ENCODE measurements at regions of chr21 and their contacts with region 1.

Region 1: GRCh38 chr21:45590246-45590725 is 48.0 kb upstream of the SLC19A1 start:
- DNase-seq: peak; percentile 69
- H3K4me3 Mint-ChIP-seq: no peak overlapping the region
- H3K27ac Mint-ChIP-seq: no peak overlapping the region
- H3K4me1 Mint-ChIP-seq: no peaks in the 10 kb centered on the region
- H3K27me3 Mint-ChIP-seq: peaks cover 4% of the 10 kb centered on the region

Region 2: DNA sequence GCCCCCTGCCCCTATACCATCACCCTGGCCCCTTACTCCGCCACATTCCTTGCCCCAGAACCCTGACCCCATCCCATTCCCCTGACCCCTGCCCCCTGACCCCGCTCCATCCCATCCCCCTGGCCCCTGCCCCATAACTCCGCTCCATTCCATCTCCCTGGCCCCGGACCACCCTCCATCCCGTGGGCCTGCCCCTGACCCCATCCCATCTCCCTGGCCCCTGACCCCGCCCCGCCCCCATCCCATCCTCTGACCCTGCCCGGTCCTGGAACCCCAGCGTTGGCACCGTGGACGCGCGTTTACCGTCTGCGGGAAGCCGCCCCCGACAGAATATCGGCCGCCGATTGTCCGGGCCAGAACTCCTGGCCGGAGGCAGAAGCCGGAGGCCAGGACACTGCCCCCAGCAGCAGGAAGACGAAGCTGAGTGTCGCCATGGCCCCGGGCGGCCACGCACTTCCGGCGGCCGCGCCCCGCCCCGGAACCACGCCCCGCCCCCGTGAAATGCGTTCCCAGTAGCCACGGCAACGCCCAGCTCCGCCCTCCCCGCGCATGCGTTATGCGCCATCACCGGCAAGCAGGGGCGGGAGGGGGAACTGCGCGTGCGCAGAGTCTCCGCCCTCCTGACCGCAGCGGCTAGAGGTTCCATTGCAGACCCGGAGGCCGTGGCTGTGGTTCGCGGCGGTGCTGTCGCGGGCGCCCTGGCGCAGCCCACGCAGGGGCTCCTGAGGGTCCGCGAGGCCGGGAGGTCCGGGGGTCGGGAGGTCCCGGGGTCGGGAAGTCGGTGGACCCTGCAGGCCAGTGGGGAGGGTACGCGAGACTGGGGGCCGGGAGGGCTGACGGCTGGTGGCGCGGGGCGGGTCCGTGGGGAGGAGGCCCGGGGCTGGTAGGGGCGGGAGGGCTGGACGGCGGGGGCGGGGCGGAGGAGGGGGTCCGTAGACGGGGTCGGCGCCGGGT is 302.6 kb before region 1 on chr21 and contains the start of gene POFUT2:
- intact Hi-C with region 1: loop called (anchors 5 kb)
- DNase-seq: peak; percentile 97
- H3K4me3 Mint-ChIP-seq: peak within 1 kb of the TSS; percentile 84
- H3K27ac Mint-ChIP-seq: peak within 1 kb of the TSS; percentile 86
- H3K4me1 Mint-ChIP-seq: peaks cover 16% of the 10 kb centered on the region
- H3K27me3 Mint-ChIP-seq: peaks cover 12% of the 10 kb centered on the region
- total RNA-seq, gene POFUT2: 14.3 and 17.6 TPM in 2 replicates

Region 3: DNA sequence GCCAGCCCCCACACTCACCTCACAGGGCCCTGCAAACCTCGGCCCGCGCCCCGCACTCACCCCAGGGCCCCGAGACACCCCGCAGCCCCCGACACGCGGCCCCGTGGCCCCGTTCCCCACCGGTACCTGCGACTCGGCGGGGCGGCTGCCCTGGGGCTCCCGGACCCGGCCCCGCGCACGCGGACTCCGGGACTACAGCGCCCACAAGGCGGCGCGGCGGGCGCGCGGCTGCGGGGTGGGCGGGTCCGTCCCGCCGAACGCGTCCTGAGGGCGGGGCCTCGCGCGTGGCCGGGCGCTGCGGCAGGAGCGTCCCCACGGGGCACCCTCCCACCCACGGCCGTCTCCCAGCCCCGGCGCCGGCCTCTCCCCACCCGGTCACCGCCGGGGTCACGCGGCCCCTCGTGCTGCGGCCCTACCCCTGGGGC is 48.0 kb before region 1 on chr21 and contains the start of gene SLC19A1:
- intact Hi-C with region 1: loop called (anchors 1 kb)
- DNase-seq: peak; percentile 78
- H3K4me3 Mint-ChIP-seq: peak within 1 kb of the TSS; percentile 89
- H3K27ac Mint-ChIP-seq: peak within 1 kb of the TSS; percentile 68
- H3K4me1 Mint-ChIP-seq: peaks cover 14% of the 10 kb centered on the region
- H3K27me3 Mint-ChIP-seq: no peaks in the 10 kb centered on the region
- total RNA-seq, gene SLC19A1: 104 and 105 TPM in 2 replicates

Region 4: GRCh38 chr21:45554477-45555175 is 35.7 kb before region 1 on chr21:
- intact Hi-C with region 1: loop called (anchors 1 kb)
- DNase-seq: peak; percentile 88
- H3K4me3 Mint-ChIP-seq: peak overlapping the region; percentile 91
- H3K27ac Mint-ChIP-seq: peak overlapping the region; percentile 93
- H3K4me1 Mint-ChIP-seq: peaks cover 22% of the 10 kb centered on the region
- H3K27me3 Mint-ChIP-seq: peaks cover 3% of the 10 kb centered on the region

Region 5: GRCh38 chr21:45607021-45607908 is 17.0 kb after region 1 on chr21:
- intact Hi-C with region 1: loop called (anchors 2 kb)
- DNase-seq: no peak
- H3K4me3 Mint-ChIP-seq: peak overlapping the region; percentile 73
- H3K27ac Mint-ChIP-seq: peak overlapping the region; percentile 91
- H3K4me1 Mint-ChIP-seq: peaks cover 6% of the 10 kb centered on the region
- H3K27me3 Mint-ChIP-seq: peaks cover 18% of the 10 kb centered on the region

Region 6: GRCh38 chr21:45768751-45769070 is 178.4 kb after region 1 on chr21:
- intact Hi-C with region 1: loop called (anchors 1 kb)
- DNase-seq: no peak
- H3K4me3 Mint-ChIP-seq: peak overlapping the region; percentile 25
- H3K27ac Mint-ChIP-seq: peak overlapping the region; percentile 95
- H3K4me1 Mint-ChIP-seq: peaks cover 36% of the 10 kb centered on the region
- H3K27me3 Mint-ChIP-seq: no peaks in the 10 kb centered on the region

Region 7: DNA sequence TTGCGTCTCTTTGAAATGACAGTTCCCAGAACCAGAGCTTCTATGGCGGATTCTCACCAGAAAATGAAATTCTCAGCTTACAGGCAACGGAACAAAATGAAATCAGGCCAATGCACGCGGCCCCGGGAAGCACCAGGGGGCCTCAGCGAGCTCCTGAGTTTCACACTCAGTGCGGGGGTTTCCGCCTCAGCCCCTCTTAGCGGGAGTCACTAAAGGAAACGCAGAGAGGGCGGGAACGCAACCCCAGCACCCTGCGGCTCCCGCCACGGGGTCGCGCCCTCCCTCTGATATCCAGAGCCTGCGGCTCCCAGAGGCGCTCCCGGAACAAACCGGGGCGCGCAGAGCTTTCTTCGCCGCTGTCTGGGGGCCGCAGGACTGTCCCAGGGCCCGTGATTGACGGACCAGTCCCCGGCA is 383.4 kb after region 1 on chr21:
- intact Hi-C with region 1: loop called (anchors 5 kb)
- DNase-seq: peak; percentile 64
- H3K4me3 Mint-ChIP-seq: peak overlapping the region; percentile 83
- H3K27ac Mint-ChIP-seq: peak overlapping the region; percentile 67
- H3K4me1 Mint-ChIP-seq: peaks cover 7% of the 10 kb centered on the region
- H3K27me3 Mint-ChIP-seq: peaks cover 31% of the 10 kb centered on the region